ENCODE measurements at regions of chr7 and their contacts with region 1.

Region 1: DNA sequence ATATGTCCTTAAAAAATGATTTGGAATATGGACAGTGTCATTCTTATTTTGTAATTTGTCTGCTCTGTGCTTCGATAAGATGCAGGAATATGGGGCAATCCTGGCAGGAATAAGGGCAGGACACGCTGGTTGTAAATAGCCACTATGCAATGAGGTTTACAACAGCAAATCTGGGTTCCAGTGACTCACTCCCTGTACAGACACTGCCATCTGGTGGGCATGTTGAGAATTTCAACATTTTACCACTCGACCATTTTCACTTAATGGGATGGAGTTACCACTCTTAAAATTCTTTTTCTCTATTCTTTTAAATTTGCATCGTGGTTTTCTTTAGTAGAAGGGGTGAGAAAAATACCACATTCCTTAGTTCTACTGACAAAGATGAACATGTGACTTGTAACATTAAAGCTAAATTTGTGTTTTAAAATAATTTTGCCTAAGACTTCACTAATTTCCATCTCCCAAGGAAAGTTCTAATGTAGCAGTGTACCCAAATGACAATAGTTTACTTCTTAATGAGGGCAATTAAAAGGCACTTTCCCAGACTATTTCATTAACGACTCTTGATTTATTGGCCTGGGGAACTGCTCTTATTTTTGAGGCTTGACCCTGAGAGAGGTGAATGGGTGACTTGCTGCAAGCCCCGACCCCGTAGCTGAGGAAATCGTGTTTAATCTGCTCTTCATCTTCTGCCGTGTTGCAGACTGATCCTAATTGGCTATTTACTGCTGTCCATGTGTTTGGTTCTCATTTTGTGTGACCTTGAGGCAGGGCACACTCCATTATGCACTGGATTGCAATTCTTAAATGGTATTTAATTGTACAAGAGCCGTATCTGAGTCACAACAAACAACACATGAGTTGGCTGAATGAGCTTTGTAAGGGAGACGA is 173.6 kb upstream of the IMMP2L start:
- DNase-seq: no peak
- H3K4me3 ChIP-seq: no peak overlapping the region
- H3K27ac ChIP-seq: no peak overlapping the region
- H3K4me1 ChIP-seq: peaks cover 0 to 6% (median 0%) of the 10 kb centered on the region in 4 donors
- H3K27me3 ChIP-seq: no peaks in the 10 kb centered on the region
- CTCF ChIP-seq: peak; percentile 64 to 81 (median 72)
- EP300 ChIP-seq: no peak
- POLR2A ChIP-seq: no peak

Region 2: GRCh38 chr7:111098011-111098925 is 637.6 kb before region 1 on chr7:
- intact Hi-C with region 1: loop called (anchors 10 kb)
- DNase-seq: no peak
- H3K4me3 ChIP-seq: no peak overlapping the region
- H3K27ac ChIP-seq: no peak overlapping the region
- H3K4me1 ChIP-seq: peaks cover 0 to under 1% (median 0%) of the 10 kb centered on the region in 4 donors
- H3K27me3 ChIP-seq: no peaks in the 10 kb centered on the region
- CTCF ChIP-seq: peak in 2 of 4 experiments; percentile 13 to 40
- EP300 ChIP-seq: no peak
- POLR2A ChIP-seq: no peak